ENCODE measurements at regions of chr2 and their contacts with region 1.

Region 1: DNA sequence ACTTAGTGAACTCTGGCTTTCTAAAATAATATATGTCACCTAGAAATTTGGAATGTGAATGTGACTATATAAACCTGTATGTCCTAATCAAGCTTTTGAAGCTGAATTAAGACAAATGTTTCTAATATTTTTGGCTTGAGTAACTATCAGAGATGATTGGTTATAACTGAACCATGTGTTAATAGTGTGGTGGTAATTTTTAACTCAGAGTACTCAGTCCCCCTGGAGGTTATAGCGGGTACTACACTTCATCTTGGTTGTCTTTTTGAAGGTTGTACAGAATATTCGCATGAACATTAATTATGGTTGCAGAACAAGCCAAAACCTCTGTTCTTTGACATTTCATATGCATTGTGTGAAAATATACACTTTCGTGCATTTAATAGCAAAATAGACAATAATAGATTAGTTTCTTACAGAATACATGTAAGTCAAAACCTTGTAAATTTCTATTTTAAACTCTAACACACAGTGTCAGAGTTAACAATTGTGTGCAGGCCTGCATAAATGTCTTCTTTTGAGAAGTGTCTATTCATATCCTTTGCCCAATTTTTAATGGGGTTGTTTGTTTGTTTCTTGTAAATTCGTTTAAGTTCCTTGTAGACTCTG is 86.0 kb downstream of the OSBPL6 start:
- DNase-seq: no peak
- H3K4me3 ChIP-seq: no peak overlapping the region
- H3K27ac ChIP-seq: no peak overlapping the region
- H3K4me1 ChIP-seq: peaks cover 0 to 28% (median 7%) of the 10 kb centered on the region in 3 donors
- H3K27me3 ChIP-seq: no peaks in the 10 kb centered on the region
- CTCF ChIP-seq: peak; percentile 56 to 84 (median 72)
- POLR2A ChIP-seq: no peak

Region 2: GRCh38 chr2:178136321-178137025 is 143.9 kb before region 1 on chr2:
- intact Hi-C with region 1: loop called (anchors 10 kb)
- DNase-seq: no peak
- H3K4me3 ChIP-seq: no peak overlapping the region
- H3K27ac ChIP-seq: no peak overlapping the region
- H3K4me1 ChIP-seq: no peaks in the 10 kb centered on the region
- H3K27me3 ChIP-seq: no peaks in the 10 kb centered on the region
- CTCF ChIP-seq: no peak
- POLR2A ChIP-seq: no peak